ENCODE measurements at regions of chr5 and their contacts with region 1.

Region 1: DNA sequence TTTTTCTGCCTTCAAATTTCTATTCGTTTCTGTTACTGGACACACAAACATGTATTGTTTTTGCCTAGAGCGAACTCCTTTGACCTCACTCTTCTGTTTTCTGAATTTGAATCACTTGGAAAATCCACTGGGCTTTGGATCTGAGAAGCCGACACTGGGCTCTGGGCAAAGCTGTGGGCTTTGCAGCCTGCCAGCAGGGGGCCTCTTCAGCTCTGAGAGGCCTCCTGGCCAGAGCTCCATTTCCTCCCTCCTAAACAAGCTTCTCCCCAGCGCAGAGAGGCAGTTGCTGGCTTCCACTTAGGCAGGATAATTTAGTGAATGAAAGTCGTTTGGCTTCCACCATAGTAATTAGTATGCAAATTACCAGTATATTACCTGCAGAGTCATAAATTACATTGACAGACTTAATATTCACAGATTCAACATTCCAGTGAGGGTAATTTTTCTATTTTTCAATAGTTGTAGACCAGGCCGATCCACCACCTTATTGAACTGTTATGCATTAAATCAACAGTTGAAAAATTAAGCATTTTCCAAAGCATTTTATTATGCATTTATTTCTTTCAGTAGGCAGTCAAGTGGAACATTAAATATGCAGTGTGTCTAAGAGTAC is 104.0 kb upstream of the ZNF366 start:
- DNase-seq: peak; percentile 68 to 83 (median 80)
- ATAC-seq: peak; percentile 93
- H3K4me3 ChIP-seq: no peak overlapping the region
- H3K4me1 ChIP-seq: no peaks in the 10 kb centered on the region
- CTCF ChIP-seq: peak; percentile 89

Region 2: GRCh38 chr5:72543365-72543764 is 67.9 kb before region 1 on chr5:
- intact Hi-C with region 1: no loop called
- DNase-seq: no peak
- ATAC-seq: no peak
- H3K4me3 ChIP-seq: no peak overlapping the region
- H3K4me1 ChIP-seq: no peaks in the 10 kb centered on the region
- CTCF ChIP-seq: no peak

Region 3: DNA sequence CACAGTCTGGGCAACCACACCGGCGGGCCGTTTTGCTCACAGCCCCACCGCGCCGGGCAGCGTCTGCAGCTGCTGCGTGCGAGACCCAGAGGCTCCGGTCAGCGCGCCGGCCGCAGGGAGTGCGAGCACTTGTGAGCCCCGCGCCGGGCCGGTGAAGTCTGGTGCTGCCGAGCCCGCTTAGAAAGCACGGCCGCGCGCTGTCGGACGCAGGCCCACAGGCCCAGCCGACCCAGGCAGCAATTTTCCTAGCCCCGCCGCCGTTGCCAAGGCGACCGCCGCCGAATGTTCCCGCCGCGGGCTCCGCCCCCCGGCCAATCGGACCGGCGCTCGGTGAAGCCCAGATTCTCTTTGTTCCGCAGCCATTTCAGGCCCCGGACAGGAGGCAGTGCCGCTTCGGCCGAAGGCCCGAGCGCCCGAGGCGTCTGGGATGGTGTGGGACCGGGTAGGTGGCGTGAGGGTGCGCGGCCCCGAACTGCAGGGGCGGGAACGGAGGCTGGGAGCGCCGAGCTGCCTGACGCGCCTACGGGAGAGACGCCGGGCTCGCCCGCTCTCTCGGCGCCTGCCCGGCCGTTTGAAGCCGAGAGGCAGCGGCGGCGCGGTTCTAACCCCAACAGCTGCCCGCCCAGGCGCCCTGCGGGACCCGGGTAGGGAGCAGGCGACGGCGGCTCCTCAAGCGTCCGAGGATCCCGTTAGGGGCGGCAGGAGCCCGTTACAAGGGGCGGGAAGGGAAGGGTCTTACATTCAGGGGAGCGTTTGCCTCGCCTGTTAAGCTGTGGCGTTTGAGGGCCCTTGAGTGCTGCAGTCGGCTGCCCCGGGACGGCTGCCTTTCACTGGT is 205.3 kb after region 1 on chr5 and contains the start of gene TNPO1:
- intact Hi-C with region 1: loop called (anchors 5 to 10 kb)
- DNase-seq: peak; percentile 94 to 97 (median 96)
- ATAC-seq: peak; percentile 93
- H3K4me3 ChIP-seq: peak within 1 kb of the TSS; percentile 64
- H3K4me1 ChIP-seq: peaks cover 10% of the 10 kb centered on the region
- CTCF ChIP-seq: no peak
- total RNA-seq, gene TNPO1: 69.4 to 95.1 (median 76.8) TPM

Measured in mucosa of descending colon (tissue), 3 donors.